ENCODE measurements at regions of chr1 and their contacts with region 1.

Region 1: DNA sequence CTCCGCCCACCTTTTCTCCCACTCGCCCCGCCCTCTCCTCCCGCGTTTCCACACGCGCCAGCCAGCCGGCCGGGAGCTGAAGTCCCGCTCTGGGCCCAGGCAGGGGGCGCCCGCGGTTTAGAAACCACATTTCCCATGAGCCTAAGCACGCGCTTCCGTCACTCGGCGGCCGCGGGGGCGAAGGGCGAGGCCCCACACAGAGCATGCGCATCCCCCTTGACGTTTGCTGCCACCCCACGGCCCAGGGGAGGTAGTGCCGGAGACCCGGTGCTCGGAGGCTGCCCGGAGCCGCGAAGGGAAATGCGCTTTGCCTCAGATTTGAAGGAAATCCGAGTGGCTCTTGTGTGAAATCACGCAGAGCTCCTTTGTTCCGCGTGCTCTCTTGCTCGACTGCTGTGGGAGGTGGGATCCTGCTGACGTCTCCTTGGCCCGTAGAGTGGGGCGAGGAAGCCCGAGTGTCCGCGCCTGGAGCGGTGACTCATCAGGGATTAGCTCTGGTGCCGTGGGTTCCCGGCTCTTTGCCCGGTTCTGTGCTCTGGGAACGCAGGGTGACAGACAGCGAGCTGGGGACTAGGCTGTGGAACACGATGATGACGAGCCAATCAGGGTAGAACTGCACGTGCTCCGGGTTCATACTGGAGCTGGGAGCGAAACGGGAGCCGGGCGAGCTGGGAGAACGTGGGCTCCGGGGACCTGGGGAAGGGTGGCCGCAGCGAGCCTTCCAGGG is 407 bp upstream of the B3GALNT2 start:
- DNase-seq: peak; percentile 99
- H3K4me3 ChIP-seq: peak overlapping the region; percentile 74
- H3K27ac ChIP-seq: peak overlapping the region; percentile 81
- H3K4me1 ChIP-seq: peaks cover 36% of the 10 kb centered on the region
- CTCF ChIP-seq: peak; percentile 80

Region 2: DNA sequence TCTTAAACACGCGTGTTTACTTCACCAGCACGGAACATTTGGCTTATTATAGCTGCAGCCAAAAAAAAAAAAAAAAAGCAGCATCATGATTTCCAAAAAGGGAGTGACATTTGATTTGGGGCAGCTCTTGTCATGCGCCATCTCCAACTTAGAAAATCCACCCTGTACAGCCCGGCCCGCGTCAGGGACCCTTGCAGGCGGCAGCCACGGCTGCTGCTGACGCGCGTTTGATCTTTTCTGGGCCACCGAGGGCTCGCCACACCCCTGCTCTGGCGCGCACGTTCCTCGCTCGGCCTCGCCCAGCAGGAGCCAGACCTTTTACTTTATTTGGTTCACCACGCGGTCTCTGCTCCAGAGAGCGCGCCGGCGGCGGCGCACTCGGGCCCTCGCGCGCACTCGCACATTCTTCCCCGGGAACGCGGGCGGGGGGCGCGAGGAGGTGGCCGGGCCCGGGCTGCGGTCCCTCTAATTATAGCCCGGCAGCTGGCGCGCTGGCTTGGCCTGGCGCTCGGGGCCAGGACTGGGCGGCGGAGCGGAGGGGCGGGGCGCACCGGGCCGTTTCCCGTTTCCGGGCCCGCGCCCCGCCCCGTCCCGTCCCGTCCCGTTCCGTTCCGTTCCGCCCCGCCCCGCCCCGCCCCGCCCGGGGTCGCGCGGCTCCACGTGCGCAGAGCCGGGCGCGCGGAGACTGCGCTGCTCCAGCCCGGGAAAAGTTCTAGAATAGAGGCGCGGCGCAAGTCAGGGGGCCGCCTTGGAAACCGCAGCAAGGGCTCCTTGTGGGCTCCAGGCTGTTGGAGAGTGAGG is 904.8 kb before region 1 on chr1:
- CTCF ChIA-PET with region 1: no interaction called
- POLR2A ChIA-PET with region 1: no interaction called
- intact Hi-C with region 1: loop called (anchors 2 kb)
- DNase-seq: peak; percentile 88
- H3K4me3 ChIP-seq: peak overlapping the region; percentile 69
- H3K27ac ChIP-seq: peak overlapping the region; percentile 93
- H3K4me1 ChIP-seq: peaks cover 69% of the 10 kb centered on the region
- CTCF ChIP-seq: 0 out of 2 replicates have a peak, but pooled peaks have one; percentile 15

Region 3: DNA sequence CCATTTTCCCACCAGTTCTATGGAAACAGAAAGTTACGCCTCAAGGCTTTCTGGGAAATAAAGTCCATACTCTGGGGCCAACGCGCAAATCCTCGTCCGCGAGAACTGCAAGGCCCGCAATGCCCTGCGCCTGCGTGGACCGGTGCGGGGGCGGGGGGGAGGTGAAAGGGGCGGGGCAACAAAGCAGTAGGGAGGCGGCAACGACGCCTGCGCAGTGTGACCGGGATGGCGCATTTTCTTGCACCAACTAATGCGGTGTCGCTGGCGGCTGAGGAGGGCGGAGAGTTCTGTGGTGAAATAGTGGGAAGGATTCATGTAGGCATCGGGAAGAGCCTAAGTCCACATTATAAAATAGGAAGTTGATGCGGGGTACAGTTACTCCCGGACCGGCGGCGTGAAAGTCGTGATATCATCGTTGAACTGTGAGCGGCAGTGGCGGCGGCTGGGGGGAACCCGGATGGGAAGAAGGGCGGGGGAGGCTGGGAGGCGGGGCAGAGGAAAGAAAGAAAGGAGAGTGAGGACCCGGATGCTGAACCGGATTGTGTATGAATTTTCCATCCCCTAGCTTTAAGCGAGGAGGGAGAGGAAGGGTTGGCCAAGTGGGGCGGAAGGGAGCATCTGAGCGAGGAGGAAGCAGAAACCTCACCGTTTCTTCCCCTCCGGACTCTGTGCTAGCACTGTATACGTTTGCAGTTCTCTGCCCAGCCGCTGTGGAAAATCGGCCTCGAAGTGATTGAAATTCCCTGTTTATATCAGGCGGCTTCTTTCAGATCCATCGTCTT is 176.1 kb before region 1 on chr1 and contains the start of gene GGPS1:
- CTCF ChIA-PET with region 1: no interaction called
- POLR2A ChIA-PET with region 1: no interaction called
- intact Hi-C with region 1: loop called (anchors 1 kb)
- DNase-seq: peak; percentile 100
- H3K4me3 ChIP-seq: peak within 1 kb of the TSS; percentile 96
- H3K27ac ChIP-seq: peak within 1 kb of the TSS; percentile 91
- H3K4me1 ChIP-seq: peaks cover 44% of the 10 kb centered on the region
- CTCF ChIP-seq: no peak
- total RNA-seq, gene GGPS1: 8.0 and 21.9 TPM in 2 replicates

Region 4: DNA sequence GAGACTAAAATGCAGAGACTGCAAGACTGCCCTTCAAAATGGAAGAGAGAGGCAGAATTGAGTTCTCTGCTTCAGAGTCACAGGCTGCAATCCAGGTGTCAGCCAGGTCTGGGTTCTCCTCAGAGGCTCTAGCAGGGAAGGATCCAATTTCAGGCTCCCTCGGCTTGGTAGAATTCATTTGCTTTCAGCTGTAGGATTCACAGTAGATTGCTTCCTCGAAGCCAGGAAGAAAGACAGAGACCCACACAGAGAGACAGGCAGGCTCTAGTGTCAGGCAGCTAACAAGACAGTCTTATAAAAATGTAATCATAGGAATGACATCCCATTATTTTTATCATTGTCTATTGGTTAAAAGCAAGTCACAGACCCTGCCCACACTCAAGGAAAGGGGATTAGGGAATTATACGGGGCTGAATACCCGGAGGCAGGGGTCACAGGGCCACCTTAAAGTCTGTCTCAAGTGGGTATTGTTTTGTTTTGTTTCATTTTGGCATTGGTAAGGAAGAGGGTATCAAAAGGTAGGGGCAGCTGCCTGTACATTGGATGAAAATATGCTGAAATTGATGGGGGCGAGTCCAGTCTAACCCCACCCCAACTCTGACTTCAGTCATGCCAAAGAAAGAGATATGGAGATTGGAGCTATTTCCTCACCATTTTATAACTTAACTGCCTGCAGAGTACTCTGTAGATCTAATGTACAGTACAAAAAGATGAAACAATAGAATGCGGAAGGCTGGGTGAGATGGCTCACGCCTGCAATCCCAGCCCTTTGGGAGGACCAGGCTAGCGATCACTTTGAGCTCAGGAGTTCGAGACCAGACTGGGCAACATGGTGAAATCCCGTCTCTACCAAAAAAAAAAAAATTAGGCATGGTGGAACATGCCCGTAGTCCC is 146.9 kb before region 1 on chr1:
- CTCF ChIA-PET with region 1: no interaction called
- POLR2A ChIA-PET with region 1: no interaction called
- intact Hi-C with region 1: no loop called
- DNase-seq: no peak
- H3K4me3 ChIP-seq: no peak overlapping the region
- H3K27ac ChIP-seq: no peak overlapping the region
- H3K4me1 ChIP-seq: no peaks in the 10 kb centered on the region
- CTCF ChIP-seq: no peak

Region 5: DNA sequence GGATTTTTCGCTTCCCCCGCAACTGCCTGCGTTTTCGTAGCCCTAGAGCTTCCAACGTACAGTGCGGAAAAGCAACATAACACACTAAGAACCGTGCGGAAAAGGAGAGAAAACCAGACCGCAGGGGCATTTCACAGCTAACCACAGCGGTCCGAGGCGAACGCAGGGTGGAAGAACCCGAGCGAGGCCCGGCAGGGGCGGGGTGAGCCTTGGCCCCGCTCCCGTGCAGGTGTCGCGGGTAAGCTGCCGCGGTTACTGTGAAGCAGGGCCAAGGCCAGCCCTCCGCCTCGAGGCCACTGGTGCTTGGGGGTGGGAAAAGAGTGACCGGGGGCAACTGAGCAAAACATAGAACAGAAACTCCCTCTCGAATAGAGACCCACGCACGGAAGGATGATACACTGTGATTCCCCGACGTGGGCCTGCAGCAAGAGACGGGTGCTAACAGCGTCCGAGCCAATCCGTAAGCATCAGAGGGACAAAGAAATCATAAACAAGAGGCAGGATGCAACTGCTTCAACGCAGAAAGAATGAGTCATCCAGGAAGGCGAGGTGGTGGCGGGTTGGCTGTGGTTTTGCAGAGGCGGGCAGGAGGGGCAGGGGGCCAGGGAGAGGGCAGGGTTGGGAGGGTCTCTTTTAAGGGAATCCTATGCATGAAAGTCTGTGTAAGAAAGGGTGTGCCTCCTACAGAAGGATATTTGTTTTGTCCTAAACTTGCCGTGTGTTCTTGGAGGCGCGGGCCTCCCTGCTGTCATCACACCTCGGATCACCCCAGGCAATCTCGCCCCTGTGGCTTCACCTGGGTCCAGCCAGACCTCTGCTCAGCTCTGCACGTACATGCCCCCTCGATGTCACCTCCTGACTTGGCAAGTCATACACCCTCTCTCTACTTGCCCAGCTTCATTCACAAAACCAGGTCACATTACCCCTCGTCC is 137.6 kb after region 1 on chr1:
- CTCF ChIA-PET with region 1: no interaction called
- POLR2A ChIA-PET with region 1: no interaction called
- intact Hi-C with region 1: no loop called
- DNase-seq: peak; percentile 9
- H3K4me3 ChIP-seq: no peak overlapping the region
- H3K27ac ChIP-seq: no peak overlapping the region
- H3K4me1 ChIP-seq: peaks cover 6% of the 10 kb centered on the region
- CTCF ChIP-seq: no peak

Region 6: DNA sequence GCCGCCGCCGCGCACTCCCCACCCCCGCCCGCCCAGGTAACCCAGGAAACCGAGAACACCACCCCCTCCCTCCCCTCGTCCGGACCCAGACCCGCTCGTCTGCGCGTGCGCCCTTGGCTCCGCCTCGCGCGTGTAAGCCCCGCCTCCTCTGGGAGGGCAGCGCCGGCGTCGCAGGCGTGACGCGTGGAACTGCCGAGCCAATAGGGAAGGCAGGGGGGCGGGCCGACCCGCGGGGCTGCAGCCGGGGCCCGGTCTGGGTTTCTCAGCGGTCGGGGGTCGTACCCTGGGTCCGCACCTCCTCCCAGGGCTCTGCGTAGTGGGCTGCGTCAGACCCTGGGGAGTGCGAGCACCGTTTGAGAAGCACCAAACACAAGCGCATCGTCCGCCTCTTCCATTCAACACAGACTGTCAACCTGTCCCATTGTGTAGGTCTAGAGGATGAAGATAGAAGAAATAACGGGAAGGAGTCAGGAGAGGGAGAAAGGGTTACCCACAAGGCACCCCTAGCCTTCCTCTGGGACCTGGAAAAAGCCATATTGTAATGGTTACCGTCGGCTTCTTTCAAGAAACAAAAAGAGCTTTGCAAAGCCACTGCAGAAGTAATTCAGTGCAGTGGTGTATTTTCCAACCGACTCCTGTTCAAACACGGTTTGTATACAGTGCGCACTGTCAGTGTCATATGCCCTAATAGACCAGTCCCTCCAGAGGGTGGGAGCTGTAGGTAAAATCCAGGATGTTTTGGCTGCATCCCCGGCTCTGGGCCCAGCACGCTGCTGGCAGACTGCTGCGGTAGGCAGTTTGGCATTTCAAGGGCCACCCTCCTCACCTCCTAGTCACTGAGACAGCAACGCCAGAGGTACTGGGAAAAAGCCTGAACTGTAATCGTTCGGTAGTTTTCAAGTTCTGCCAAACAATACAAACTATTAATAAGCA is 362.5 kb after region 1 on chr1:
- CTCF ChIA-PET with region 1: interaction called, 3 read pairs
- POLR2A ChIA-PET with region 1: interaction called, 3 read pairs
- intact Hi-C with region 1: loop called (anchors 2 kb)
- DNase-seq: peak; percentile 96
- H3K4me3 ChIP-seq: peak overlapping the region; percentile 78
- H3K27ac ChIP-seq: peak overlapping the region; percentile 82
- H3K4me1 ChIP-seq: peaks cover 21% of the 10 kb centered on the region
- CTCF ChIP-seq: no peak

Region 7: DNA sequence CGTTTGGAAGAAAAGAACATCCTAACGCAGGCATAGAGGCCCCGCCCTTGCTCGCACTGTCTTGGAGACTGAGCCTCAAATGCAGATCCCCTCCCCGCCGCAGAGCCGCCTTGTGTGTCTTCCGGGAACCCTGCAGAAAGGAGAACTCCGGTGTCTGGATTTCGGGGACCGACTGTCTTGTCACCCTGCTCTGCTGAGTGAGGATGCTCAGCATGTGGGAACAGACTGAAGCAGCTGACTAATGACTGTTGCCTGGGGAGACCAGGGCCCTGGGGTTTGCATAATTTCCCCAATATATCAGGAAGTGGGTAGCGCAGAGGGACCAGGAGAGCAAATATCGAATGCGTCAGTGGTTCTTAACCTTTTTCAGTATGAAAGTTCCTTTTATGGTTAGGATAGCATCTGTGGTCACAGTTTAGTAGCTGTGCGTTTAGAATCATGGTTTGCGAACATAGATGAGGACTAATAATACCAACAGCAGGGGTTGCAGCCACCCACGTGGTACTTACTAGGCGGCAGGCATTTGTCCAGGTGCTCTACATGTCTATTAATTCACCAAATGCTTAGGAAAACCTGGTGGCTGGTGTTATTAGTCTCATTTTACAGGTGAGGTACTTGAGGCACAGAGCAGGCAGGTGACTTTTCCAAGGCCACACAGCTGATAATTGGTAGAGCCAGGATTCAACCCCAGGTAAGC is 652.0 kb after region 1 on chr1:
- CTCF ChIA-PET with region 1: no interaction called
- POLR2A ChIA-PET with region 1: no interaction called
- intact Hi-C with region 1: loop called (anchors 10 kb)
- DNase-seq: peak; percentile 86
- H3K4me3 ChIP-seq: peak overlapping the region; percentile 40
- H3K27ac ChIP-seq: peak overlapping the region; percentile 68
- H3K4me1 ChIP-seq: peaks cover 56% of the 10 kb centered on the region
- CTCF ChIP-seq: no peak